Endothelial cell of umbilical vein (primary cell): ENCODE measurements at regions of chr14 and their contacts with region 1.

Region 1: DNA sequence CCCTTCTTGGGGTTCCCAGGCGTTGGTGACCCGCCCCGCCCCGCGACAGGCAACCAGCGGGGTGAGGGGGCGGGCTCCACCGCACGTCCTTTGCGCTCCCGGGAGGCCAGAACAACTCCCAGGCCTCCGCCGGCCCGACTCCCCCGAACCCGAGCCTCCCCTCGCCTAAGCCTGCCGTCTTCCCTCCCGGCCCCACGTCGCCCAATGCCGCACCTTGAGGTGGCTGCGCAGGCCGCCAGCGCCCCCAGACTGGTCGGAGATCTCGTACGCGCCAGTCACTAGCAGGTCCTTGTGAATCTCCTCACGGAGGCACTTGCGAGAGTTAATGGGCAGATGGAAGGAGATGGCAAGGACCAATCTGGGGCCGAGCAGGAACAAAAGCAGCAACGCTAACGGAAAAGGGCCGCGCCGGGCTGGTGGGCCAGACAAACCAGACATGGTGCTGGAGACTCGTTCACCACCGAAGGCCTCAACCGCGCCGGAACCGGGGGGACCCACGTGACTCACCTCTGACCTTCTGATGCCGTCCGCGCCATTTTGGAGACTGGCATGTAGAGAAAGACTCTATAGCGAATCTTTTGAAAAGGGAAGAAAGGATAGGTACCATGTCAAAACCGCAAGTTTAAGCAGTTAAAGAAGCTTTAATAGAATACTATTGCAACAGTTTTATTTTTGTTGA is at the start of gene TMED10:
- DNase-seq: peak; percentile 90
- H3K4me3 ChIP-seq: peak within 1 kb of the TSS; percentile 44 to 92 (median 83)
- H3K27ac ChIP-seq: peak within 1 kb of the TSS; percentile 94
- H3K4me1 ChIP-seq: peaks cover 8% of the 10 kb centered on the region
- H3K27me3 ChIP-seq: no peaks in the 10 kb centered on the region
- CTCF ChIP-seq: no peak
- POLR2A ChIP-seq: peak; percentile 65
- total RNA-seq, gene TMED10: 313 and 338 TPM in 2 replicates

Region 2: DNA sequence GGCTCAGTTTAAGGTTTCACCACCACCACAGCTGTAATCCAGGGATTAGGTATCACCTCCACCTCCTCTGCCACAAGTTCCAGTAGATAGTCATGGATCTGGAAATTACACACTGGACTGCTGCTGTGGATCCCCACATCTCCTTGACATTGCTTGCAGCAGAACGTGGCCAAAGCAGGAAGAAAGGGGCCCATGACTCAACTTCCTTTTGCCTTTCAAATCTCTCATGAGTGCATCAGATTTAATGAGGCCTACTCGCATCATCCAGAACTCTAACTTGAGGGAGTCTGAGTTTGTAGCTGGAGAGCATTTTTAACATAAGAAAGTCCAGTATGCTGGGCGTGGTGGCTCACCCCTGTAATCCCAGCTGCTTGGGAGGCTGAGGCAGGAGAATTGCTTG is 29.3 kb after region 1 on chr14:
- CTCF ChIA-PET with region 1: no interaction called
- POLR2A ChIA-PET with region 1: no interaction called
- dilution Hi-C with region 1: no loop called
- intact Hi-C with region 1: loop called (anchors 2 kb)
- DNase-seq: peak; percentile 82
- H3K4me3 ChIP-seq: no peak overlapping the region
- H3K27ac ChIP-seq: peak overlapping the region; percentile 74
- H3K4me1 ChIP-seq: peaks cover 15% of the 10 kb centered on the region
- H3K27me3 ChIP-seq: no peaks in the 10 kb centered on the region
- CTCF ChIP-seq: no peak
- POLR2A ChIP-seq: no peak

Region 3: DNA sequence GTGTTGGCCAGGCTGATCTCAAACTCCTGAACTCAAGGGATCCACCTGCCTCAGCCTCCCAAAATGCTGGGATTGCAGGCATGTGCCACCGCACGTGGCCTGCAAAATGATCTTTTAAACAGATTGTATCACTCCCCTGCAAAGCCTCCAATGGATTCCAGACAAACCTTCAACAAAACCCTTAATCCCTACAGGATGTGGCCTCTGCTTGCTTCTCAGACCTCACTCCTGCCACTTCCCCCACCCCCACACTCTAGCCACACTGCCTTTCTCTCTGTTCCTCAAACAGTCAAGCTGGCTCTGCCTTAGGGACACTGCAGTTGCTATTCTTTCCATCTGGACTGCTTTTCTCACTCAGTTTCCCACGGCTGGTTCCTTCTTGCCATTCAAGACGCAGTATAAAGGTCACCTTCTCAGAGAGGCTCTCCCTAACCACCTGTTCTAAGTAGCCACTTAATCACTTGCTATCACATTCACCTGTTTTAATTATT is 47.4 kb after region 1 on chr14:
- CTCF ChIA-PET with region 1: no interaction called
- POLR2A ChIA-PET with region 1: no interaction called
- dilution Hi-C with region 1: no loop called
- intact Hi-C with region 1: loop called (anchors 2 kb)
- DNase-seq: no peak
- H3K4me3 ChIP-seq: no peak overlapping the region
- H3K27ac ChIP-seq: no peak overlapping the region
- H3K4me1 ChIP-seq: peaks cover 13% of the 10 kb centered on the region
- H3K27me3 ChIP-seq: no peaks in the 10 kb centered on the region
- CTCF ChIP-seq: no peak
- POLR2A ChIP-seq: no peak

Region 4: DNA sequence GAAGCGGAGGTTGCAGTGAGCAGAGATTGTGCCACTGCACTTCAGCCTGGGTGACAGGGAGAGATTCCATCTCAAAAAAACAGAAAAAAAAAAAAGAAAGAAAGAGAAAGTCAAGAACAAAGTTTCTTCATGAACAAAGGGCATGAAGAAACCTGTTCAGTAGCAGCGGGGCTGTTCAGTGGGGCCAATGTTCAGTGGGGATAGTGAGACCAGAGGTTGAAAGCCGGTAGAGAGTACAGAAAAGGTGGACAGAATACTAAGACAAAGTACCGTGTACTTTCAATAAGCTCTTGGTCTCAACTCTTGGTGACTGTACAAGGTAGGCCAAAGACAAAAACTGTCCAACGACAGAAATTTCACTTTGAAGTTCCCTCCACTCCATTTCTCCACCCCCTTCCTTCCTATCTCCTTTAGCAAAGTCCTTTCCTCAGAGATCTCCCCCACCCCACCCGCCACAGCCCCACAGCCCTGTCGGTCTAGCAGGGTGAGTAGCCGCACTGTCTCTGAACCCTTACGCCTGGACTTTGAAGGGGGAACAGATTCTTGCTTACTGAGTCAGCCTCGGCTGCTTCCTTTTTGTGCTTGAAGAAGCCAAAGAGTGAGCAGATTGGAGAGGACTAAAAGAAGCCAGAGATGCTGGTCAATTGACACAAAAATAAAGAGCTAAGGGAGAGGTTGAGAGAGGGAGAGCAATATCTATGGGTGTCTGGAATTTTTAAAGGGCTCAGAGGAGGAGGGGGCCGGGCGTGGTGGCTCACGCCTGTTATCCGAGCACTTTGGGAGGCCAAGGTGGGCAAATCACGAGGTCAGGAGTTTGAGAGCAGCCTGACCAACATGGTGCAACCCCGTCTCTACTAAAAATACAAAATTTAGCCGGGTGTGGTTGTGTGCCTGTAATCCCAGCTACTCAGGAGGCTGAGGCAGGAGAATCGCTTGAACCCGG is 58.2 kb after region 1 on chr14:
- CTCF ChIA-PET with region 1: no interaction called
- POLR2A ChIA-PET with region 1: no interaction called
- dilution Hi-C with region 1: no loop called
- intact Hi-C with region 1: loop called (anchors 1 kb)
- DNase-seq: peak; percentile 92
- H3K4me3 ChIP-seq: no peak overlapping the region
- H3K27ac ChIP-seq: peak overlapping the region; percentile 91
- H3K4me1 ChIP-seq: peaks cover 23% of the 10 kb centered on the region
- H3K27me3 ChIP-seq: no peaks in the 10 kb centered on the region
- CTCF ChIP-seq: no peak
- POLR2A ChIP-seq: no peak

Region 5: GRCh38 chr14:75278422-75279161 is 102.3 kb after region 1 on chr14 and contains the start of gene FOS:
- CTCF ChIA-PET with region 1: no interaction called
- POLR2A ChIA-PET with region 1: no interaction called
- dilution Hi-C with region 1: no loop called
- intact Hi-C with region 1: loop called (anchors 1 kb)
- DNase-seq: peak; percentile 93
- H3K4me3 ChIP-seq: peak within 1 kb of the TSS; percentile 31 to 85 (median 68)
- H3K27ac ChIP-seq: peak within 1 kb of the TSS; percentile 92
- H3K4me1 ChIP-seq: peaks cover 11% of the 10 kb centered on the region
- H3K27me3 ChIP-seq: no peaks in the 10 kb centered on the region
- CTCF ChIP-seq: no peak
- POLR2A ChIP-seq: peak; percentile 98
- total RNA-seq, gene FOS: 9.2 and 63.2 TPM in 2 replicates